IMR-90 (cell line): ENCODE measurements at regions of chr9 and their contacts with region 1.

Region 1: GRCh38 chr9:1009101-1009707 is 32.7 kb downstream of the DMRT3 start:
- DNase-seq: peak; percentile 60
- ATAC-seq: peak; percentile 96
- H3K4me3 ChIP-seq: no peak overlapping the region
- H3K27ac ChIP-seq: no peak overlapping the region
- H3K4me1 ChIP-seq: no peaks in the 10 kb centered on the region
- H3K27me3 ChIP-seq: no peaks in the 10 kb centered on the region
- CTCF ChIP-seq: peak; percentile 93
- POLR2A ChIP-seq: no peak
- RAD21 ChIP-seq: peak; percentile 97

Region 2: DNA sequence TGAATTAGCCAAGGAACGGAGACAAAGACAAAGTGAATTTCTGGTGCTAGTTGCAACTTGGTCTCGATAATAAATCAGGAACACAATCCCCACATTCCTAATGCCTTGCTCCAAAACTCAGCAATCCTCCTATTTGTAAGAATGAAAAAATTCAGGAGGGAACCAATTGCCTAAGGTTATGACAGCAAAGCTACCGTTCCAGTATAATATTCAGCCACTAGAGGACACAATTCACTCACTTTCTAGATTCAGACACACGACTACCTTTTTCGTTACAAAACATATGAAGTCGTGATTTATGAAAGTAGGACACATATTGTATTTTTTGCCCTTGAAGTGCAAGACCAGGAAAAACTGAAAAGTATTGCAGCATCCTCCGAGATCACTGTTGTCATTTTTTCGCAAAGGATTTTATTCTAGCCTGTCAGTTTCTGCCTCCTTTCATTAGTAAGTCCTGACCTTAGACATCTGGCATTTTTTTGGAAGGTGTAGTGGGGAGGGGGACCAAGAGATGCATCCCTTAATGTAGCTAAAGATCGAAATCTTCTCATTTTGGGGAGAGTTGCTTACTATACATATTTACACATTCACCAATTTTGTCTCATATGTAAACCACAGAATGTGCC is 661.4 kb before region 1 on chr9:
- CTCF ChIA-PET with region 1: interaction called, 3 read pairs
- POLR2A ChIA-PET with region 1: no interaction called
- dilution Hi-C with region 1: no loop called
- in situ Hi-C with region 1: no loop called
- intact Hi-C with region 1: loop called (anchors 5 kb)
- DNase-seq: peak; percentile 41
- ATAC-seq: peak; percentile 72
- H3K4me3 ChIP-seq: no peak overlapping the region
- H3K27ac ChIP-seq: no peak overlapping the region
- H3K4me1 ChIP-seq: no peaks in the 10 kb centered on the region
- H3K27me3 ChIP-seq: peaks cover 18% of the 10 kb centered on the region
- CTCF ChIP-seq: peak; percentile 66
- POLR2A ChIP-seq: no peak
- RAD21 ChIP-seq: peak; percentile 62

Region 3: DNA sequence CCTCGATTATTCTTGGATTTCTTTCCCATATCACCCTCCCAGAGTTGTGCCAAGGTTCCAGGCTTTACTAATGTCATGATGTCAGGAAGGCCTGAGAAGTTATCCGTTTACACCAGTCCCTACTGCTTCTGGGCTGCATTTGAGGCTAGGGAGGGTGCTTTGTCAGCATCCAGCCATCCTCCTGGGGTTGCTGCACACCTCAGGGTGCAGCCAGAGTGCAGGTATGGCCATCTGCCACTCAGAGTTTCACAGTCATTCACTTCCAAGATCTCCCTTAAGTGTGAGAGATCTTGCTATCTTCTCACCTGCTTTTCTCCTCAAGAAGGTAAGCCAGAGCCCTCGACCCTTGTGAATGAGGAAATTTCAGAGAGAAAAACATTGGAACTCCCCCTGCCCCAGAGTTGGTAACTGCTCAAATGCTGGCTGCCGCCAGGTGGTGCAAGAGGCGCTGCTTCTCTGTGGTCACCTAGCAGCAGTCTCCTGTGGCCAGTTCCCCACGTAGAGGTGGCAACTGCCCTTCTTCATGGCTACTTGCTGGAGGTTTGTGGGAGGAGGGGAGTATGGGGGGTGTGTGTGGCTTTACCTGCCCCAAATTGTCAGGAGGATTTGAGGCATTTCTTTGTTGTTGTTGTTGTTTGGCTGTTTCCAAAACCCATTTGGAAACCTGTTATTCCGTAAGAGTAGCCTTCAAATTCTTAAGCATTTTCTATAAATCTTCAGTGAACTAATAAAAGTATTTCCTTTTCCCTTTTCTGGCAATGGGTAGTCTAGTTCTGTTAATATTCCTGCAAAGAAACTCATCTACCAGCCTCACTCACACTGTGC is 427.3 kb before region 1 on chr9:
- CTCF ChIA-PET with region 1: no interaction called
- POLR2A ChIA-PET with region 1: no interaction called
- dilution Hi-C with region 1: no loop called
- in situ Hi-C with region 1: loop called (anchors 10 kb)
- intact Hi-C with region 1: no loop called
- DNase-seq: no peak
- ATAC-seq: peak; percentile 46; the same call in 1 of the 2 replicates
- H3K4me3 ChIP-seq: no peak overlapping the region
- H3K27ac ChIP-seq: no peak overlapping the region
- H3K4me1 ChIP-seq: no peaks in the 10 kb centered on the region
- H3K27me3 ChIP-seq: no peaks in the 10 kb centered on the region; the same call in 1 of the 2 replicates
- CTCF ChIP-seq: peak; percentile 36
- POLR2A ChIP-seq: no peak
- RAD21 ChIP-seq: peak; percentile 29; the same call in 1 of the 2 replicates

Region 4: DNA sequence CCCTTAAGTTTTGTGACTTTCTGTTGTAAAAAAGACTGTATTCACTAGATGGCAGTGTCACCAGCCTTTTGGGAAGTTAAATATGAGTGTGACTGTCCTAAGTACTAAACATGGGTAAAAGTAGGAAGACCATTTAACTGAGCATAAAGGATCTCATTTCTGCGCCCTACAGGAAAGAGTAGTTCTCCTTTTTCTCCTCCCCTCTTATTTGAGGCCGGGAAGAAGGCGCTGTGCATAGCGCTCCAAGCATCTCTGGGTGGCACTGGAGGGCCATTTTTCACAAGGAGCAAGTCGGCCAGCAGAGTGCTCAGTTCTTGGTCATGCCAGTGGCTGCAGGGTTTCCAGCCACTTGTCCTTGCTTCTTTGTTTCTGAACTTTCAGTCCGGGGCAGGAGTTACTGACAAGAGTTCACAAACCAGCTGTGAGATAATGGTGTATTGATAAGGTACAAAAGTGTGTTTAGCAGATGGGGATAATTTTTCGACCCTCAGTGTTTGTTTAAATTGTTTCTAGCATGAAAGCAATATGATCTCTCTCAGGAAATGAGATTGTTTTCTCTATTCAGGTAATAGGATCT is 395.3 kb before region 1 on chr9:
- CTCF ChIA-PET with region 1: no interaction called
- POLR2A ChIA-PET with region 1: no interaction called
- dilution Hi-C with region 1: no loop called
- in situ Hi-C with region 1: loop called (anchors 10 kb)
- intact Hi-C with region 1: loop called (anchors 2 kb)
- DNase-seq: peak; percentile 91
- ATAC-seq: peak; percentile 97
- H3K4me3 ChIP-seq: no peak overlapping the region
- H3K27ac ChIP-seq: no peak overlapping the region
- H3K4me1 ChIP-seq: peaks cover 3% of the 10 kb centered on the region
- H3K27me3 ChIP-seq: no peaks in the 10 kb centered on the region
- CTCF ChIP-seq: peak; percentile 95
- POLR2A ChIP-seq: peak; percentile 48
- RAD21 ChIP-seq: peak; percentile 93

Region 5: DNA sequence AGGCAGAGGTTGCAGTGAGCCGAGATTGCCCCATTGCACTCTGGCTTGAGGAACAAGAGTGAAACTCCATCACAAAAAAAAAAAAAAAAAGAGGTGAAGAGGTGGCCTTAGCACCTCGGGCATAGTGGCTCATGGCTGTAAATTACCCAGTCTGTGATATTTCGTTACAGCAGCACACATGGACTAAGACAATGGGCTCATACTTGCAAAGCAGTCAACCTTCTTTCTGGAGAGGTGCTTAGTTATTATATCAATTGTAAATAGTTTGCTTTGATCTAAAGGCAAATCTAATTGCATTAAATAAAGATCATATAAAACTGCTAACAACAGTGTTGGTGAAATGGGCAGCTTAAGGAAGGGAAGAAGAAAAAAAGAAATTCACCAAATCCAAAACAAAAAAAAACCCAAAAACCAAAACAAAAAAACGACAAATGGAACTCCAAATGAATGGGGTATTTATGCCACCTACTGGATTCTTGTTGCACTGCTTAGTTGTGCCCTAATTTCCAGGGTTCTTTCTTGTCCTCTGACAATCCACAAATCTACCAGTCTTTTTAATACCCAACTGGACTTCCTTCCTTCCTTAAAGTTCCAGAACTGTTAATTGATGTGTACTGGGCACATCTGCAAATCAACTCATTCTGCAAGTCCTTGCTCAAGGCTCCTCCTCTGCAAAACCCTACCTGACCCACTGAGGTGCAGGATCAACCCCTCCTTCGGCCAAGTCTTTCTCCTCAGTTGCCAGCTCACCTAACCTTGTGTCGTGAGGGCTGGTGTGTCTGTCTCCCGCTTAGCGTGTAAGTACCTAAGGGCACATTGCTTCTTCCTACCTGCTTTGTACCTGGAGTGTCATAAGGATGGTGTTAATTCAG is 202.7 kb before region 1 on chr9:
- CTCF ChIA-PET with region 1: interaction called, 5 read pairs
- POLR2A ChIA-PET with region 1: no interaction called
- dilution Hi-C with region 1: no loop called
- in situ Hi-C with region 1: no loop called
- intact Hi-C with region 1: loop called (anchors 5 kb)
- DNase-seq: peak; percentile 51
- ATAC-seq: peak; percentile 37; the same call in 1 of the 2 replicates
- H3K4me3 ChIP-seq: no peak overlapping the region
- H3K27ac ChIP-seq: no peak overlapping the region
- H3K4me1 ChIP-seq: peaks cover 8% of the 10 kb centered on the region
- H3K27me3 ChIP-seq: no peaks in the 10 kb centered on the region
- CTCF ChIP-seq: peak; percentile 92
- POLR2A ChIP-seq: no peak
- RAD21 ChIP-seq: peak; percentile 88

Region 6: DNA sequence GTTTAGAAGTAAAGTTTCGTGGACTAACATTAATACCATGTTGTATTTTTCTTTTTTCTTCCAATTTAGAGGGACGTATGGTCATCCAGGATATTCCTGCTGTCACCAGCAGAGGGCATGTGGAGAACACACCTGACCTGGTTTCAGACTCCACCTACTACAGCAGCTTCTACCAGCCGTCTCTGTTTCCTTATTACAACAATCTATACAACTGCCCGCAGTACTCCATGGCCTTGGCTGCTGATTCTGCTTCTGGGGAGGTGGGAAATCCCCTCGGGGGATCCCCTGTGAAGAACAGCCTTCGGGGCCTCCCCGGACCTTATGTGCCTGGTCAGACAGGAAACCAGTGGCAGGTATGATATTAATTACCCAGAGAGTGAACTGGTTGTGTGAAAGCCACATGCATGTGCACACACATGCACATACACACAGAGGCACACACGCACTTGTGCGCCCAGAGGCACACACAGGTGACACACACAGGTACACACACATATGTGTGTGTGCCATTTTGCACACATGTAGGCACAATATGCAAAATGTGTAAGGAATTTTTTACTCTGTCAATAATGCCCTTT is 115.3 kb before region 1 on chr9:
- CTCF ChIA-PET with region 1: interaction called, 6 read pairs
- POLR2A ChIA-PET with region 1: no interaction called
- dilution Hi-C with region 1: no loop called
- in situ Hi-C with region 1: loop called (anchors 5 kb)
- intact Hi-C with region 1: loop called (anchors 1 kb)
- DNase-seq: peak; percentile 49
- ATAC-seq: peak; percentile 74
- H3K4me3 ChIP-seq: no peak overlapping the region
- H3K27ac ChIP-seq: no peak overlapping the region
- H3K4me1 ChIP-seq: no peaks in the 10 kb centered on the region
- H3K27me3 ChIP-seq: no peaks in the 10 kb centered on the region; the same call in 1 of the 2 replicates
- CTCF ChIP-seq: peak; percentile 66
- POLR2A ChIP-seq: no peak
- RAD21 ChIP-seq: peak; percentile 63

Region 7: GRCh38 chr9:935344-935965 is 73.7 kb before region 1 on chr9:
- CTCF ChIA-PET with region 1: no interaction called
- POLR2A ChIA-PET with region 1: no interaction called
- dilution Hi-C with region 1: no loop called
- in situ Hi-C with region 1: no loop called
- intact Hi-C with region 1: no loop called
- DNase-seq: peak; percentile 3
- ATAC-seq: no peak
- H3K4me3 ChIP-seq: no peak overlapping the region
- H3K27ac ChIP-seq: no peak overlapping the region
- H3K4me1 ChIP-seq: no peaks in the 10 kb centered on the region
- H3K27me3 ChIP-seq: peaks cover 1% of the 10 kb centered on the region; the same call in 1 of the 2 replicates
- CTCF ChIP-seq: no peak
- POLR2A ChIP-seq: no peak
- RAD21 ChIP-seq: no peak

Region 8: GRCh38 chr9:1065130-1065529 is 55.9 kb after region 1 on chr9:
- CTCF ChIA-PET with region 1: interaction called, 10 read pairs
- POLR2A ChIA-PET with region 1: no interaction called
- dilution Hi-C with region 1: no loop called
- in situ Hi-C with region 1: no loop called
- intact Hi-C with region 1: no loop called
- DNase-seq: no peak
- ATAC-seq: no peak
- H3K4me3 ChIP-seq: no peak overlapping the region
- H3K27ac ChIP-seq: no peak overlapping the region
- H3K4me1 ChIP-seq: no peaks in the 10 kb centered on the region
- H3K27me3 ChIP-seq: no peaks in the 10 kb centered on the region
- CTCF ChIP-seq: no peak
- POLR2A ChIP-seq: no peak
- RAD21 ChIP-seq: no peak